ENCODE measurements at regions of chr19 and their contacts with region 1.

Region 1: GRCh38 chr19:5048091-5048726 is 79.3 kb downstream of the KDM4B start:
- DNase-seq: peak; percentile 30 to 79 (median 52)
- ATAC-seq: peak; percentile 88
- H3K4me3 ChIP-seq: no peak overlapping the region
- H3K4me3 Mint-ChIP-seq: no peak overlapping the region
- H3K27ac ChIP-seq: no peak overlapping the region
- H3K27ac Mint-ChIP-seq: no peak overlapping the region
- H3K4me1 ChIP-seq: peaks cover 5% of the 10 kb centered on the region
- H3K4me1 Mint-ChIP-seq: peaks cover 3% of the 10 kb centered on the region
- H3K27me3 ChIP-seq: no peaks in the 10 kb centered on the region
- H3K27me3 Mint-ChIP-seq: no peaks in the 10 kb centered on the region
- CTCF ChIP-seq: peak; percentile 92

Region 2: DNA sequence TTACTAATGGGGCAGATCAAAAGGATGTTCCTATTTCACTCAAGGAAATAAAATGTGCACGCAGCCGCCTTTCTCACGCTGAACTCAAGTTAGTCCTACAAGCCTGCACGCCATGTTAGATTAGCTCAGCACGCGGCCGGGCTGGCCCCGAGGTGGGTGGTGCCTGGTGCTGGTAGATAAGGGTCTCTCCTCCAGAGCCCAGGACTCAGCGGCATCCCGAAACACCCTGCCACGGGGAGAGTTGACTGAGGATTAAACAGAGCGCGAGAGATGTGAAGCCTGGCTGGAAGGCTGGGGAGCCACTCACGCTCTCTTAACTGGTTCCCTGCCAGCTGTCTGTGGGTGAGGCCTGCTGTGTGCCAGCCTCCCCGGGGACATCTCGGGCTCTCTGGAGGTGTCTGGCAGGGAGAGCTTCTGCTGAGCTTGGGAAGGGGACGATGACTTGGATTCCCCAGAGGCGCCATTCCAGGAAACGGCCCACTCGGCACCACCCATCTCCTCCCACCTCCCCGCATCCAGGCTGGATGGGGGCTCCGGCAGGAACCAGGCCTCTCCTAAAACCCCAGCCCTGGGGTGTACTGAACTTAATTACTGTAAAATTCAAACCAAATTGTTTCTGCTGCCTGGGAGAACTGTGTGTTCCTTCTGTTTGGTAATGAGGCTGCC is 42.9 kb after region 1 on chr19:
- CTCF ChIA-PET with region 1: no interaction called
- POLR2A ChIA-PET with region 1: no interaction called
- intact Hi-C with region 1: no loop called
- DNase-seq: no peak
- ATAC-seq: no peak
- H3K4me3 ChIP-seq: no peak overlapping the region
- H3K4me3 Mint-ChIP-seq: no peak overlapping the region
- H3K27ac ChIP-seq: no peak overlapping the region
- H3K27ac Mint-ChIP-seq: no peak overlapping the region
- H3K4me1 ChIP-seq: no peaks in the 10 kb centered on the region
- H3K4me1 Mint-ChIP-seq: peaks cover 5% of the 10 kb centered on the region
- H3K27me3 ChIP-seq: no peaks in the 10 kb centered on the region
- H3K27me3 Mint-ChIP-seq: no peaks in the 10 kb centered on the region
- CTCF ChIP-seq: no peak

Region 3: GRCh38 chr19:5154129-5154798 is 106.1 kb after region 1 on chr19:
- CTCF ChIA-PET with region 1: interaction called, 10 read pairs
- POLR2A ChIA-PET with region 1: no interaction called
- intact Hi-C with region 1: loop called in 1 of 2 experiments (anchors 1 kb)
- DNase-seq: peak in 6 of 9 experiments; percentile 25 to 70 (median 58)
- ATAC-seq: peak; percentile 60
- H3K4me3 ChIP-seq: no peak overlapping the region
- H3K4me3 Mint-ChIP-seq: no peak overlapping the region
- H3K27ac ChIP-seq: no peak overlapping the region
- H3K27ac Mint-ChIP-seq: no peak overlapping the region
- H3K4me1 ChIP-seq: no peaks in the 10 kb centered on the region
- H3K4me1 Mint-ChIP-seq: peaks cover 5% of the 10 kb centered on the region
- H3K27me3 ChIP-seq: no peaks in the 10 kb centered on the region
- H3K27me3 Mint-ChIP-seq: no peaks in the 10 kb centered on the region
- CTCF ChIP-seq: peak; percentile 33

Region 4: GRCh38 chr19:5376928-5377327 is 328.7 kb after region 1 on chr19:
- CTCF ChIA-PET with region 1: no interaction called
- POLR2A ChIA-PET with region 1: no interaction called
- intact Hi-C with region 1: loop called in 1 of 2 experiments (anchors 1 kb)
- DNase-seq: no peak
- ATAC-seq: no peak
- H3K4me3 ChIP-seq: no peak overlapping the region
- H3K4me3 Mint-ChIP-seq: no peak overlapping the region
- H3K27ac ChIP-seq: no peak overlapping the region
- H3K27ac Mint-ChIP-seq: no peak overlapping the region
- H3K4me1 ChIP-seq: no peaks in the 10 kb centered on the region
- H3K4me1 Mint-ChIP-seq: no peaks in the 10 kb centered on the region
- H3K27me3 ChIP-seq: peaks cover 0 to 7% of the 10 kb centered on the region in 2 experiments
- H3K27me3 Mint-ChIP-seq: peaks cover 29% of the 10 kb centered on the region
- CTCF ChIP-seq: no peak

Region 5: GRCh38 chr19:5577785-5578493 is 529.7 kb after region 1 on chr19:
- CTCF ChIA-PET with region 1: interaction called, 4 read pairs
- POLR2A ChIA-PET with region 1: no interaction called
- intact Hi-C with region 1: loop called in 1 of 2 experiments (anchors 1 kb)
- DNase-seq: peak; percentile 46 to 85 (median 72)
- ATAC-seq: peak; percentile 93
- H3K4me3 ChIP-seq: no peak overlapping the region
- H3K4me3 Mint-ChIP-seq: no peak overlapping the region
- H3K27ac ChIP-seq: no peak overlapping the region
- H3K27ac Mint-ChIP-seq: peak overlapping the region; percentile 21
- H3K4me1 ChIP-seq: no peaks in the 10 kb centered on the region
- H3K4me1 Mint-ChIP-seq: peaks cover 7% of the 10 kb centered on the region
- H3K27me3 ChIP-seq: no peaks in the 10 kb centered on the region
- H3K27me3 Mint-ChIP-seq: no peaks in the 10 kb centered on the region
- CTCF ChIP-seq: peak; percentile 98